ENCODE measurements at regions of chr14 and their contacts with region 1.

Region 1: GRCh38 chr14:74362361-74362915 is 14.2 kb downstream of the VRTN start:
- DNase-seq: peak; percentile 40 to 76 (median 54)
- ATAC-seq: peak; percentile 71
- H3K4me3 ChIP-seq: no peak overlapping the region
- H3K4me3 Mint-ChIP-seq: no peak overlapping the region
- H3K27ac ChIP-seq: no peak overlapping the region
- H3K27ac Mint-ChIP-seq: no peak overlapping the region
- H3K4me1 ChIP-seq: peaks cover 6% of the 10 kb centered on the region
- H3K4me1 Mint-ChIP-seq: no peaks in the 10 kb centered on the region
- H3K27me3 ChIP-seq: peaks cover 0 to 5% of the 10 kb centered on the region in 2 experiments
- H3K27me3 Mint-ChIP-seq: peaks cover 10% of the 10 kb centered on the region
- CTCF ChIP-seq: peak; percentile 94

Region 2: DNA sequence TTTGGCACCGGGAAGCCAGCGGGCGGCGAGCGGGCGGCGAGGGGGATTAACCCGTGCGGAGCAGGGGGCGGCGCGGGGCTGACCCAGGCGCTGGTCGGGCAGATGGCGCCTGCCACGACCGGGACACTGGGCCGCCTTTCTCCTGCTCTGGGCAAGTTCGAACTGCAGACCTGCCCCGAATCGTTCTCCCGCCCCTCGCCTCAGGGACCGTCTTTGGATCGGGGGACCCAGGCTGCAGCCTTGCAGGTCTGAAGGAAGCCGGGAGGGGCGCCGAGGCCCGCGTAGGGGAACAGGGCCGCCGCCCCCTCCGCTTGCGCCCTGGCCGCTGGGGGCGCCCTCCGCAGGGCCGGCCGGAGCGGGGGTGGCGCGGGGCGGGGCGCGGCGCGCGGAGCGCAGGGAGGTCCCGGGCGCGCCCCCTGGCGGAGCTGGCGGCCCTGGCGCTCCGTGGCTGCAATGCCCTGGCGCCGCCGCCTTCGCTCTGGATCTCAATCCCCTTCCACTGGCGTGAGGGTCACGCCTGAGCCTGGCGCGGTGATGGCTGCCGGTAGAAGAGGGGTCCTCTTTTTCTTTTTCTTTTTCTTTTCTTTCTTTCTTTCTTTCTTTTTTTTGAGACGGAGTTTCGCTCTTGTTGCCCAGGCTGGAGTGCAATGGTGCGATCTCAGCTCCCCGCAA is 250.0 kb after region 1 on chr14:
- CTCF ChIA-PET with region 1: no interaction called
- POLR2A ChIA-PET with region 1: no interaction called
- intact Hi-C with region 1: loop called in 1 of 2 experiments (anchors 2 kb)
- DNase-seq: peak; percentile 65 to 95 (median 81)
- ATAC-seq: peak; percentile 79
- H3K4me3 ChIP-seq: peak overlapping the region; percentile 65
- H3K4me3 Mint-ChIP-seq: peak overlapping the region; percentile 79
- H3K27ac ChIP-seq: no peak overlapping the region
- H3K27ac Mint-ChIP-seq: no peak overlapping the region
- H3K4me1 ChIP-seq: peaks cover 54% of the 10 kb centered on the region
- H3K4me1 Mint-ChIP-seq: peaks cover 29% of the 10 kb centered on the region
- H3K27me3 ChIP-seq: no peaks in the 10 kb centered on the region
- H3K27me3 Mint-ChIP-seq: peaks cover 9% of the 10 kb centered on the region
- CTCF ChIP-seq: peak; percentile 52

Region 3: GRCh38 chr14:74671789-74672188 is 309.4 kb after region 1 on chr14:
- CTCF ChIA-PET with region 1: no interaction called
- POLR2A ChIA-PET with region 1: no interaction called
- intact Hi-C with region 1: loop called in 1 of 2 experiments (anchors 10 kb)
- DNase-seq: no peak
- ATAC-seq: no peak
- H3K4me3 ChIP-seq: no peak overlapping the region
- H3K4me3 Mint-ChIP-seq: no peak overlapping the region
- H3K27ac ChIP-seq: no peak overlapping the region
- H3K27ac Mint-ChIP-seq: no peak overlapping the region
- H3K4me1 ChIP-seq: no peaks in the 10 kb centered on the region
- H3K4me1 Mint-ChIP-seq: no peaks in the 10 kb centered on the region
- H3K27me3 ChIP-seq: no peaks in the 10 kb centered on the region
- H3K27me3 Mint-ChIP-seq: no peaks in the 10 kb centered on the region
- CTCF ChIP-seq: no peak

Region 4: GRCh38 chr14:74804219-74804826 is 441.9 kb after region 1 on chr14:
- CTCF ChIA-PET with region 1: no interaction called
- POLR2A ChIA-PET with region 1: no interaction called
- intact Hi-C with region 1: loop called in 1 of 2 experiments (anchors 10 kb)
- DNase-seq: peak in 7 of 14 experiments; percentile 7 to 48 (median 17)
- ATAC-seq: peak; percentile 69
- H3K4me3 ChIP-seq: no peak overlapping the region
- H3K4me3 Mint-ChIP-seq: no peak overlapping the region
- H3K27ac ChIP-seq: no peak overlapping the region
- H3K27ac Mint-ChIP-seq: no peak overlapping the region
- H3K4me1 ChIP-seq: no peaks in the 10 kb centered on the region
- H3K4me1 Mint-ChIP-seq: peaks cover 17% of the 10 kb centered on the region
- H3K27me3 ChIP-seq: no peaks in the 10 kb centered on the region
- H3K27me3 Mint-ChIP-seq: no peaks in the 10 kb centered on the region
- CTCF ChIP-seq: peak; percentile 56